ENCODE measurements at regions of chr19 and their contacts with region 1.

Region 1: DNA sequence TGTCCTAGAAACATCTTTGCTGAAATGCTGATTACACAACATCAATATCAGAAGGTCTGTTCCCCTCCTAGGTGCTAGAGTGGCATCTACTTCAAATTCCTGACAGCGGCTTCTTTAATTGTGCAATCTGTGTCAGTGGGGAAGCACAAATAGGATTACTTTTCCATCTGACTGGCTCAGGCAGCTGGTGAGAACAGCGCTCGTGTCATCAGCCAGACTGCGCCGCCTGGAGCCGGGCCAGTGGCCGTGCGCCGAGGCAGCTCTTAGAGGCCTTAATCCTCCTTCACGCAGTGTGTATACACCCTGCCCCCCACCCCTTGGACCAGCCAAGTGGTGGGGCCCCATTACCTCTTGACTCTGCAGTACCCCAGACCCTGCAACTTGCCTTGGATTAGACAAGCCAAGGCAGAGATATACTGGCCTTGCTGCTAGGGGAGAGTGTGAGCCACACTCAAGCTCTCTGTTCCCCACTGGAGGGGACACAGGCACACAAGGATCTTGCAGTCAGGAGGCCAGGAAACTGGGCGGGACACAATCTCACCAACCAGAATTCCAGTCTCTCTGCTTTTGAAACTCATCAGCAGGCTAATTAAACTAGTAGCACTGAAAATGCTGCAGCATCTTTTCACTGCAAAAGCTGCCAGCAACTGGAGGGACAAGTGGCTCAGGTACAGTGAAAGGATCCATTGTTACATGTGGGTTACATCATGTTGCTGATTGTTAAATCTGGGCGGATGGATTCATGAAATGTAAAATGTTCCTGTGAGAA is 48.9 kb upstream of the EPHX3 start:
- DNase-seq: peak; percentile 23
- ATAC-seq: peak; percentile 17; the same call in 1 of the 2 replicates
- H3K4me3 ChIP-seq: no peak overlapping the region
- H3K27ac ChIP-seq: no peak overlapping the region
- H3K4me1 ChIP-seq: peaks cover 37% of the 10 kb centered on the region
- H3K27me3 ChIP-seq: no peaks in the 10 kb centered on the region
- CTCF ChIP-seq: no peak

Region 2: GRCh38 chr19:15297416-15298224 is 16.5 kb after region 1 on chr19:
- CTCF ChIA-PET with region 1: interaction called, 3 read pairs
- POLR2A ChIA-PET with region 1: interaction called, 4 read pairs
- intact Hi-C with region 1: loop called (anchors 2 kb)
- DNase-seq: peak; percentile 47
- ATAC-seq: peak; percentile 77
- H3K4me3 ChIP-seq: peak overlapping the region; percentile 23; the same call in 1 of the 2 replicates
- H3K27ac ChIP-seq: peak overlapping the region; percentile 77
- H3K4me1 ChIP-seq: peaks cover 37% of the 10 kb centered on the region
- H3K27me3 ChIP-seq: no peaks in the 10 kb centered on the region
- CTCF ChIP-seq: peak; percentile 50

Measured in PC-3 (cell line).